ENCODE measurements at regions of chr3 and their contacts with region 1.

Region 1: GRCh38 chr3:128607710-128608048 is 42.9 kb downstream of the RPN1 start:
- DNase-seq: no peak
- ATAC-seq: no peak
- H3K4me3 Mint-ChIP-seq: no peak overlapping the region; the same call in 1 of the 2 replicates
- H3K27ac Mint-ChIP-seq: no peak overlapping the region
- H3K4me1 Mint-ChIP-seq: no peaks in the 10 kb centered on the region
- H3K27me3 Mint-ChIP-seq: peaks cover 7% of the 10 kb centered on the region; the same call in 1 of the 2 replicates
- CTCF ChIP-seq: no peak

Region 2: DNA sequence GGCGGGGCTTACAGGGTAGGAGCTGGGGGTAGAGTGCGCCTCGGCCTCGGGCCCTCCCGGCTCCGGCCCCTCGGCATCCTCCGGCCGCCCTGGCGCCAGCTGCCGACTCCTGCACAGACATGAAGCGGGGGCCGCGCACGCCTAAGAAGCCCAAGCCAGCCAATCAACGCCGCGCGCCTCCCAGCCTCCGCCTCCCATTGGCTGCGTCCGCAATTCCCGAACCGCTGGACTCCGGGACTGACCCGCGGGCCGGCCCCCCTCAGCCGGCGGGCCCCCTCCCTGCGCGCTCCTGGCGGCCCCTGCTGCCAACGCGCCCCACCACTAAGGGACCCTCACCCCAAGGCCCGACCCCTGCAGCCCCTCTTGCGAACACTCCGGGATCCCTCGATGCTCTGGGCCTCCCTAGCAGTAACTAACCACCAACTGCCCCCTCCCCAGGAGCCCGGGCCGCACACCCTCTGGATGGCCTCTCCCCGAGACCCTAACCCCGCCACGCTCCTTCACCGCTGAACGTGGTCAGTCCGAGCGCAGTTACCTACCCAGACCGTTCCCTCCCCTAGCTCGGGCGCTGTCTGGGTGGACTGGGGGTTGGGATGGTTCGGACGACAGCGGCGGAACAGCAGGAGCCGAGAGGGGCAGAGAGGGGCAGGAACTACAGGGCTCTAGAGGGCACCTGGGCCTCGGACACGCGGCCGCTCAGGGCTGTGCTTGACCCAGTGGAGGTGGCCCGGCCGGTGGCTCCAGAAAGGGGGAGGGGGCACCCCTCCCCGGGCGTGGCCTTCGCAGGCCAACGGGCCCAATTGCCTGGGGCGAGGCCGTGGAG is 119.7 kb before region 1 on chr3:
- CTCF ChIA-PET with region 1: interaction called, 14 read pairs
- POLR2A ChIA-PET with region 1: no interaction called
- DNase-seq: peak; percentile 91
- ATAC-seq: peak; percentile 66
- H3K4me3 Mint-ChIP-seq: peak overlapping the region; percentile 67
- H3K27ac Mint-ChIP-seq: no peak overlapping the region
- H3K4me1 Mint-ChIP-seq: peaks cover 57% of the 10 kb centered on the region
- H3K27me3 Mint-ChIP-seq: peaks cover 100% of the 10 kb centered on the region
- CTCF ChIP-seq: no peak

Region 3: DNA sequence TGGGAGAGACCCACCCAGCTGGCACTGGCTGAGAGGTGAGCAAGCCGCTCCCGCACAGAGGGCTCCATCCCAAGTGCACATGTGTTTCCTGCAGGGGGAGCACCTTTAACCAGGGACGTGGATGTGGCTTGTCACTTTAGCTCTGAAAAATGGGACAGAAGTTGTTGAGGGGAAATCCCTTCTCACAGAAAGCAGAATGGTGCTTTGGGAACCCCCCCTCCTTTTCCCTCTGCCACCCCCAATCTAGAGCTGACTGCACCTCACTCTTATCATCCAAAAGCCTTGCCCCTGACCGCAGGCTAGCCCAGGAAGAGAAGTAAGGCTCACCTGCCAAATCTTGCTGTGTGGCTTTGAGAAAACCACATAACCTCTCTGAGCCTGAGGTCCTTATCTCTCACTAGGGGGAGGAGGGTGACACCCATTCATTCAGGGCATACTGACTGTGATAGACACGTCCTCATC is 35.0 kb before region 1 on chr3:
- CTCF ChIA-PET with region 1: interaction called, 26 read pairs
- POLR2A ChIA-PET with region 1: no interaction called
- DNase-seq: peak; percentile 59
- ATAC-seq: peak; percentile 69
- H3K4me3 Mint-ChIP-seq: no peak overlapping the region
- H3K27ac Mint-ChIP-seq: no peak overlapping the region
- H3K4me1 Mint-ChIP-seq: peaks cover 19% of the 10 kb centered on the region
- H3K27me3 Mint-ChIP-seq: no peaks in the 10 kb centered on the region; the same call in none of the 2 replicates
- CTCF ChIP-seq: peak; percentile 20; the same call in 1 of the 2 replicates

Region 4: GRCh38 chr3:128590948-128591347 is 16.7 kb before region 1 on chr3:
- CTCF ChIA-PET with region 1: interaction called, 35 read pairs
- POLR2A ChIA-PET with region 1: no interaction called
- DNase-seq: peak; percentile 76
- ATAC-seq: peak; percentile 97
- H3K4me3 Mint-ChIP-seq: no peak overlapping the region
- H3K27ac Mint-ChIP-seq: no peak overlapping the region
- H3K4me1 Mint-ChIP-seq: peaks cover 4% of the 10 kb centered on the region
- H3K27me3 Mint-ChIP-seq: no peaks in the 10 kb centered on the region
- CTCF ChIP-seq: peak; percentile 7; the same call in 1 of the 2 replicates

Region 5: DNA sequence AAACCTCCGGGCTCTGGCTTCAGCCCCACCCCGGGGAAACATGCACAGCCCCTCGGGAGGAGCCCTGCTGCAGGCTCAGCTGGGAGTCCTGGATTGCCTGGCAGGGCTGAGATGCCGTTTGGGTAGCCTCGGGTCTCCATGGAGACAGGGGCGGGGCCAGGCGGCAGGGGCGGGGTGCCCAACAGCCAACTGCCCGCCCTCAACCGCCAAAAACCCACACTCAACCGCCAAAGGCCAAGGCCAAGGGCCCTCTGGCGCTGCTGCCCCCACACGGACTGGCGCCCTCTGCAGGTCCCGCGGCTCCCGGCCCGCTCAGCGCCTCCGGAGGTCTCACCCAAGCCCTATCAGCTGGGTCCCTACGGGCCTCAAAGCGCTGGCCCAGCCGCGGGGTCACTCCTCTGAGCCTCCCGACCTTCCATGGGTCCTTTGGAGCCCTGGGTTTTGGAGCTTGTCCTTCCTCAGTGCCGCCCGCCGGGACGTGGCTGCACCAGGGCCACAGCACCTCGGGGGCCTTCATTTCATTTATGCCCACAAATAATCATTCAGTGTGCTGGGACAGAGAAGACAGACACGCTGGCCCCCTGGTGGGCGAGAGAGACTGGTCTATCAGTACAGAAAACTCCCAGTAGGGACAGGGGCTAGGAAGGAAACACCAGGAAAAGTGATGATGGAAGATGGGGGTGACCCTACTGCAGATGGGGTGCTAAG is 238.3 kb after region 1 on chr3:
- CTCF ChIA-PET with region 1: interaction called, 12 read pairs
- POLR2A ChIA-PET with region 1: no interaction called
- DNase-seq: peak; percentile 96
- ATAC-seq: peak; percentile 92
- H3K4me3 Mint-ChIP-seq: peak overlapping the region; percentile 60
- H3K27ac Mint-ChIP-seq: no peak overlapping the region; the same call in 1 of the 2 replicates
- H3K4me1 Mint-ChIP-seq: peaks cover 24% of the 10 kb centered on the region
- H3K27me3 Mint-ChIP-seq: peaks cover 12% of the 10 kb centered on the region
- CTCF ChIP-seq: peak; percentile 51; the same call in 1 of the 2 replicates